ENCODE measurements at regions of chr5 and their contacts with region 1.

Region 1: DNA sequence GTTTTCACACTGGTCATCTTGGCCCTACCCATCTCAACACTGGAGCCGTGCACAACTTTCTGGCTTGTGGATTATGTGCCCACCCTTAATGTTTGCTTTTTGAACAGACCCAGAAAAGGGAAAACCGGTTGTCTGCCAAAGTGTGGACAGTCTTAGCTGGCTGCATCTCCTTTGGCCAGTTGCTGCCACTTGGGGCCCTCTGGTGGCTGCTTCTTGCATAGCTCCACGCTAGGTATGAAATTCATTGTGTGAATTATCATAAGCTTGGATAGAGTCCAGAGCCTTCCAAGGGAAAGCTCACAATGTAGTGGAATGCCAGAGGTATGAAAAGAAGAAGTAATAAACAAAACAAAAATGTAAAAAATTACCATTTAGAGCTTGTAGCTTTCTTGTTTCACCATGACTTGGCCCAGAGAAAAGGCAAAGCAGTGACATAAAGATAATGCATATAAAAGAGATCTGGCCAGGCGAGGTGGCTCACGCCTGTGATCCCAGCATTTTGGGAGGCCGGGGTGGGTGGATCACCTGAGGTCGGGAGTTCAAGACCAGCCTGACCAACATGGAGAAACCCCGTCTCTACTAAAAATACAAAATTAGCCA is 12.5 kb upstream of the SLC36A3 start:
- DNase-seq: peak; percentile 73
- H3K4me3 ChIP-seq: no peak overlapping the region
- H3K27ac ChIP-seq: no peak overlapping the region
- H3K4me1 ChIP-seq: no peaks in the 10 kb centered on the region
- H3K27me3 ChIP-seq: no peaks in the 10 kb centered on the region
- CTCF ChIP-seq: peak; percentile 88 to 90
- POLR2A ChIP-seq: no peak

Region 2: GRCh38 chr5:151002250-151002649 is 313.8 kb before region 1 on chr5:
- CTCF ChIA-PET with region 1: interaction called, 13 read pairs
- POLR2A ChIA-PET with region 1: no interaction called
- dilution Hi-C with region 1: no loop called
- intact Hi-C with region 1: no loop called
- DNase-seq: peak; percentile 55
- H3K4me3 ChIP-seq: no peak overlapping the region
- H3K27ac ChIP-seq: no peak overlapping the region
- H3K4me1 ChIP-seq: no peaks in the 10 kb centered on the region
- H3K27me3 ChIP-seq: peaks cover 0 to 4% of the 10 kb centered on the region in 2 experiments
- CTCF ChIP-seq: peak in 1 of 2 donors; percentile 36
- POLR2A ChIP-seq: no peak

Region 3: DNA sequence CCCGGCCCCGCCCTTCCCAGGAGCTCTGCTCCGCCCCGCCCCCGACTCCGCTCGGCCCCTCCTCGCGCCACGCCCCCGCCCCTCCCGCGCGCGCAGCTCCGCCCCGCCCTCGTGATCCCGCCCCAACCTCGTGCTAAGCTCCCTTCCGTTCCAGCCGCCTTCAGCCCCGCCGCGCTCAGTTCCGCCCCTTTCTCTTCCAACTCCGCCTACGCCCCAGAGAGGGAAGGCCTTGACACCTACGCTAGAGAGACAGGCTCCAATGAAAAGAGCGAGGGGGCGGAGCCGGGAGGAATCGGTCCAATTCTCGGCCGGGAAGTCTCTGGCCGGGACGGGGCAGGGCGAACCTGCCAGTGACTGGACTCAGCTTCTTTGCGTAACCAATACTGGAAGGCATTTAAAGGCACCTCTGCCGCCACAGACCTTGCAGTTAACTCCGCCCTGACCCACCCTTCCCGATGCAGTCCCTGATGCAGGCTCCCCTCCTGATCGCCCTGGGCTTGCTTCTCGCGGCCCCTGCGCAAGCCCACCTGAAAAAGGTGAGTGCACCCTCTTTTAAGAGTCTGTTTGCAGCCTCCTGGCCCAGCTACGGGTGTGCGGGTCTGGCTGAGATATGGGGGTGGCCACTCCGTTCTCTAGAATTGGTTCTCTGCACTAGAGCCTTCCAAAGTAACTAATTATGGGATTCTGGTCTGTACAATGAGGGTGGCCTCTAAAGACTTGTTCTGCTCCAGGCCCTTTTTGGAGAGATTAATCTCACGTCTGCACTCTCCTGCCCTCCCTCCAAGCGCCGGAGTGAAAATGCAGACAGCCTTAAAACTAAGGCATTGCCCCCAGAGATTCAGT is 63.1 kb before region 1 on chr5 and contains the start of gene GM2A:
- CTCF ChIA-PET with region 1: interaction called, 18 read pairs
- POLR2A ChIA-PET with region 1: interaction called, 3 read pairs
- dilution Hi-C with region 1: no loop called
- intact Hi-C with region 1: no loop called
- DNase-seq: peak; percentile 100
- H3K4me3 ChIP-seq: peak within 1 kb of the TSS; percentile 48 to 75 (median 55)
- H3K27ac ChIP-seq: no peak within 1 kb of the TSS
- H3K4me1 ChIP-seq: peaks cover 5% of the 10 kb centered on the region
- H3K27me3 ChIP-seq: no peaks in the 10 kb centered on the region
- CTCF ChIP-seq: no peak
- POLR2A ChIP-seq: peak; percentile 46
- total RNA-seq, gene GM2A: 21.2 and 22.5 TPM in 2 replicates

Region 4: GRCh38 chr5:151509231-151509630 is 193.1 kb after region 1 on chr5:
- CTCF ChIA-PET with region 1: no interaction called
- POLR2A ChIA-PET with region 1: no interaction called
- dilution Hi-C with region 1: no loop called
- intact Hi-C with region 1: loop called (anchors 10 kb)
- DNase-seq: peak; percentile 29
- H3K4me3 ChIP-seq: no peak overlapping the region
- H3K27ac ChIP-seq: no peak overlapping the region
- H3K4me1 ChIP-seq: peaks cover 7% of the 10 kb centered on the region
- H3K27me3 ChIP-seq: no peaks in the 10 kb centered on the region
- CTCF ChIP-seq: no peak
- POLR2A ChIP-seq: no peak

Region 5: DNA sequence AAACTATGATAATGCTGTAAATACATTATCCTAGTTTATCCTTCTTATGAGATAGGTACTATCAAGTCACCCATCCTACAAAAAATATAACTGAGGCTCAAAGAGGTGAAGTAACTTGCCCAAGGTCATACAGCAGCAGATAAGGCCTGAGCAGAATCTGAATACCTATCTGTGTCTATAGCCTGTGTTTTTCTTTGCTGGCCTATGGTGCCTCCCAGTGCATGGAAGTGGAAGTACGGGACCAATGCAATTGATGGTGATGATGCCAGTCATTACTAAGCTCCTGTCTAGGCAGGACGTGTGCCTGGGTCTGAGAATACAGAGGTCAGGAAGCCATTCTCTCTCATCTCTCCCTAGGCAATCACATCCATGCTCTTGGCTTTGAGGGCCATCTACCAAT is 207.2 kb after region 1 on chr5:
- CTCF ChIA-PET with region 1: interaction called, 6 read pairs
- POLR2A ChIA-PET with region 1: no interaction called
- dilution Hi-C with region 1: no loop called
- intact Hi-C with region 1: loop called (anchors 5 kb)
- DNase-seq: peak; percentile 52
- H3K4me3 ChIP-seq: no peak overlapping the region
- H3K27ac ChIP-seq: no peak overlapping the region
- H3K4me1 ChIP-seq: no peaks in the 10 kb centered on the region
- H3K27me3 ChIP-seq: peaks cover 0 to 2% of the 10 kb centered on the region in 2 experiments
- CTCF ChIP-seq: peak; percentile 53 to 57
- POLR2A ChIP-seq: no peak